Endothelial cell of umbilical vein (primary cell): ENCODE measurements at regions of chr11 and their contacts with region 1.

Region 1: DNA sequence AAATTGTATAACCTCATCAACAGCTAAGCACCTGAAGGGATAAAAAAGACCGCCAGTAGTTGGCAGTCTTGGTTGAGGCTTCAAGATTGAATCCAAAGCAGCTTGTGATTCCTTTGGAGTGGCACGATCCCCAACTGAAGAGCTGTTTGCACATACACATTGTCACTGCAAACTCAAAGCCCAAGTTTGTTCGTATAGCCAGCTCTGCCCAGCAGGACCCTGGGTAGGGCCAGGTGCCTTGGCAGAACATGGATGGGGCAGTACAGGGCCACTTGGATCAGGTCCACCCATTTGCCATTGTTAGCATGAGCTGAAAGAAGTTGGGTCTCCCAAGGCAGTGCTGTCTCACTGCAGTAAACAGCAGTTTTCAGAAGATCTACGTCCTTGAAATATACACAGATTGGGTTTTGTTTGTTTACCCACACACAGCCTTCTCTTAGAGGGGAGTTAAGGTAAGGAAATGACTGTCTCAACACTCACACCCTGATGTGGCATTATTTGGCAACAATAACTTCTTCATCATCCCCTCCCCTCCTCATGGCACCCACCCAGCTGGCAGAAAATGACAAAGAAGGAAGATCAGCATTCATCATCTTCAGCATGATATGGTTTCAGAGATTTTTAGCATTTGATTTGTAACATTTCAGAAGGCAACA is 132.9 kb downstream of the COMMD9 start:
- DNase-seq: peak; percentile 70
- H3K4me3 ChIP-seq: no peak overlapping the region
- H3K27ac ChIP-seq: peak overlapping the region; percentile 75
- H3K4me1 ChIP-seq: peaks cover 28% of the 10 kb centered on the region
- H3K27me3 ChIP-seq: no peaks in the 10 kb centered on the region
- CTCF ChIP-seq: no peak
- POLR2A ChIP-seq: no peak

Region 2: GRCh38 chr11:35907648-35908431 is 248.4 kb before region 1 on chr11:
- CTCF ChIA-PET with region 1: no interaction called
- POLR2A ChIA-PET with region 1: no interaction called
- dilution Hi-C with region 1: no loop called
- intact Hi-C with region 1: no loop called
- DNase-seq: peak; percentile 82
- H3K4me3 ChIP-seq: no peak overlapping the region
- H3K27ac ChIP-seq: peak overlapping the region; percentile 16
- H3K4me1 ChIP-seq: peaks cover 26% of the 10 kb centered on the region
- H3K27me3 ChIP-seq: no peaks in the 10 kb centered on the region
- CTCF ChIP-seq: no peak
- POLR2A ChIP-seq: no peak

Region 3: GRCh38 chr11:36233204-36233603 is 76.9 kb after region 1 on chr11:
- CTCF ChIA-PET with region 1: no interaction called
- POLR2A ChIA-PET with region 1: no interaction called
- dilution Hi-C with region 1: no loop called
- intact Hi-C with region 1: loop called (anchors 1 kb)
- DNase-seq: peak; percentile 88
- H3K4me3 ChIP-seq: no peak overlapping the region
- H3K27ac ChIP-seq: no peak overlapping the region
- H3K4me1 ChIP-seq: peaks cover 13% of the 10 kb centered on the region
- H3K27me3 ChIP-seq: no peaks in the 10 kb centered on the region
- CTCF ChIP-seq: no peak
- POLR2A ChIP-seq: no peak